ENCODE measurements at regions of chr5 and their contacts with region 1.

Region 1: DNA sequence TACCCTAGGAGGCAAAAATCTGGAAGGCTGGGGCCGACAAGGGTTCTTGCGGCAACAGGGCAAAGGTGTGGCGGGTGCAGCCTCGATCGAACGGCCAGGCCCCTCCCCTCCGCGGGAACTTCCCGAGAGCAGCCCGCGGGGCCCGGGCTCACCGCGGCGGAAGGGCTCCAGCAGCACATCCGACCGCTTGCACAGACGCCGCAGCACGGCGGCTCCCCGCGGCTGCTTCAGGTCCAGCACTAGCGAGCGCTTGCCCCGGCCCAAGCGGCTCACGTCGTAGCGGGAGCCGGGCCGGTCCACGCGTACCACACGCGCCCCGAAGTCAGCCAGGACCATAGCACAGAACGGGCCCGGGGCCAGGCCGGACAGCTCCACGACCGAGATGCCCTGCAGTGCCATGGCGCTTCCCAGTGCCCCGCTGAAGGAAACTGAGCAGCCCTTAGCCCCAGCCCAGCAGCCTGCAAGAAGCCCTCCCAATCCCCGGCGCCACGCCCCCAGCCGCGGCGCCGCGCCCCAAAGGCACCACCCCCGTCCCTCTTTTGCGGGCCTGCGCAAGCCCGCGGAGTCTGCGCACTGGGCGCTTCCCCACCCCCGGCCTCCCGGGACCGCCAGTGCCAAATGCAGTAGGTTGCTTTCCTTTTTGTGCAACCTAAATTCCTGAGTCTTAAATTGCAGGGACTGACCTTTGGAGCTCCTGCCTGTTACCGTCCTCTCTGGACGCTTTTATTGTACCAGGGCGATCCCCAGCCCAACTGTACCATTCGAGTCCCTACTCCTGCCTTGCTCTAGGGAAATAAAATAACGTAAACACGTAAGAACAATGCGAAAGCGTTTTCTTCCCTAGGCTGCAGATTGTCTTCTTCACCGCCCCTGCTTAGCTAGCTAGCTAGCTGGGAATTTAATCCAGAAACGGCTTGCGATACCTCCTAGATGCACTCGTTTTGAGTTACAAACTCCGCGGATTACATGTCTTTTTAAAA is at the start of gene AMACR:
- DNase-seq: peak; percentile 81 to 95 (median 87)
- ATAC-seq: peak; percentile 87 to 93
- H3K4me3 Mint-ChIP-seq: peak within 1 kb of the TSS; percentile 77 to 97 (median 92)
- H3K27ac Mint-ChIP-seq: peak within 1 kb of the TSS; percentile 73 to 98 (median 96)
- H3K4me1 Mint-ChIP-seq: peaks cover 12 to 30% (median 23%) of the 10 kb centered on the region in 4 donors
- H3K27me3 Mint-ChIP-seq: no peaks in the 10 kb centered on the region
- polyA plus RNA-seq, gene AMACR: 5.9 to 9.1 (median 7.2) TPM

Region 2: GRCh38 chr5:33867241-33867640 is 140.7 kb before region 1 on chr5:
- POLR2A ChIA-PET with region 1: no interaction called
- DNase-seq: no peak
- ATAC-seq: no peak
- H3K4me3 Mint-ChIP-seq: no peak overlapping the region
- H3K27ac Mint-ChIP-seq: no peak overlapping the region
- H3K4me1 Mint-ChIP-seq: no peaks in the 10 kb centered on the region
- H3K27me3 Mint-ChIP-seq: peaks cover 0 to 3% (median 0%) of the 10 kb centered on the region in 5 donors

Region 3: GRCh38 chr5:34022121-34022705 is 14.3 kb after region 1 on chr5:
- POLR2A ChIA-PET with region 1: interaction called, 18 read pairs
- DNase-seq: peak in 3 of 10 donors; percentile 17 to 42 (median 23)
- ATAC-seq: peak; percentile 60 to 89
- H3K4me3 Mint-ChIP-seq: peak overlapping the region in 6 of 10 donors; percentile 1 to 59 (median 32)
- H3K27ac Mint-ChIP-seq: peak overlapping the region; percentile 15 to 93 (median 88)
- H3K4me1 Mint-ChIP-seq: peaks cover 16 to 24% (median 19%) of the 10 kb centered on the region in 4 donors
- H3K27me3 Mint-ChIP-seq: no peaks in the 10 kb centered on the region